ENCODE measurements at regions of chr10 and their contacts with region 1.

Region 1: DNA sequence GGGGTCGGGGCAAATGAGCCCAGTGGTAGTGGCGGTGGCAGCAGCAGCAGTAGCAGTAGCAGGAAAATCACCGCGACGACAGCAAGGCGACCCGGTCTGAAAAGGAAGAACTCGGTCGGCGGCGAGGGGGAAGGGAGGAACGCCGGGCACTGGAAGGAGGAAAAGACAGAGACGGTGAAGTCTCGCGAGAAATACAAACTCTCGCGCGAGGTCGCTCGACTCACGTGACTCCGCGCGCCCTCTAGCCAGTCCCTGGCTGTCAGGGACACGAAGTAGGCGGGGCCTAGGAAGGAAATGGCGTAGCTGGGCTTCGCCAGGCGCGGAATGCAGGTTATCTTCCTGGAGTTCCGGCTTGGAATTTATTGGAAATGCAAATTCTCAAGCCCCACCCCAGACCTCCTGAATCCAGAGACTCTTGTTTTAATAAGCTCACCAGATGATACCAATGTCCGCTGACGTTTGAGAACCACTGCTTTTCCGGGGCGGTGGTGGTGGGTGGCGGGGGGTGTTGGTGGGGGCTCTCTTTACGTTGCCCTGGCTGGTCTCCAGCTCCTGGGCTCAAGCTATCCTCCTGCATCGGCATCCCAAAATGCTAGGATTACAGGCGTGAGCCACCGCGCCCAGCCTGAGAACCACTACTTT is at the start of gene SMNDC1:
- DNase-seq: peak; percentile 98
- ATAC-seq: peak; percentile 93
- H3K4me3 ChIP-seq: peak within 1 kb of the TSS; percentile 64 to 89 (median 79)
- H3K4me3 Mint-ChIP-seq: peak within 1 kb of the TSS; percentile 98
- H3K27ac ChIP-seq: peak within 1 kb of the TSS; percentile 76 to 91
- H3K27ac Mint-ChIP-seq: peak within 1 kb of the TSS; percentile 99
- H3K4me1 ChIP-seq: peaks cover 20 to 24% of the 10 kb centered on the region in 2 donors
- H3K4me1 Mint-ChIP-seq: peaks cover 43% of the 10 kb centered on the region
- H3K27me3 ChIP-seq: no peaks in the 10 kb centered on the region
- H3K27me3 Mint-ChIP-seq: no peaks in the 10 kb centered on the region
- CTCF ChIP-seq: no peak
- total RNA-seq, gene SMNDC1: 34.4 and 36.0 TPM in 2 replicates

Region 2: GRCh38 chr10:110210674-110211464 is 94.0 kb before region 1 on chr10:
- CTCF ChIA-PET with region 1: interaction called, 5 read pairs
- POLR2A ChIA-PET with region 1: interaction called, 3 read pairs
- intact Hi-C with region 1: loop called (anchors 1 kb)
- DNase-seq: peak; percentile 94
- ATAC-seq: peak; percentile 68
- H3K4me3 ChIP-seq: peak overlapping the region; percentile 67 to 90 (median 82)
- H3K4me3 Mint-ChIP-seq: peak overlapping the region; percentile 88
- H3K27ac ChIP-seq: peak overlapping the region; percentile 82 to 85
- H3K27ac Mint-ChIP-seq: peak overlapping the region; percentile 97
- H3K4me1 ChIP-seq: peaks cover 44 to 67% of the 10 kb centered on the region in 2 donors
- H3K4me1 Mint-ChIP-seq: peaks cover 58% of the 10 kb centered on the region
- H3K27me3 ChIP-seq: peaks cover 0 to 18% (median 7%) of the 10 kb centered on the region in 4 experiments
- H3K27me3 Mint-ChIP-seq: peaks cover 4% of the 10 kb centered on the region
- CTCF ChIP-seq: no peak

Region 3: GRCh38 chr10:110241407-110241806 is 63.5 kb before region 1 on chr10:
- CTCF ChIA-PET with region 1: no interaction called
- POLR2A ChIA-PET with region 1: no interaction called
- intact Hi-C with region 1: no loop called
- DNase-seq: no peak
- ATAC-seq: no peak
- H3K4me3 ChIP-seq: no peak overlapping the region
- H3K4me3 Mint-ChIP-seq: no peak overlapping the region
- H3K27ac ChIP-seq: no peak overlapping the region
- H3K27ac Mint-ChIP-seq: no peak overlapping the region
- H3K4me1 ChIP-seq: peaks cover 3 to 6% of the 10 kb centered on the region in 2 donors
- H3K4me1 Mint-ChIP-seq: peaks cover 16% of the 10 kb centered on the region
- H3K27me3 ChIP-seq: no peaks in the 10 kb centered on the region
- H3K27me3 Mint-ChIP-seq: peaks cover 3% of the 10 kb centered on the region
- CTCF ChIP-seq: no peak

Region 4: DNA sequence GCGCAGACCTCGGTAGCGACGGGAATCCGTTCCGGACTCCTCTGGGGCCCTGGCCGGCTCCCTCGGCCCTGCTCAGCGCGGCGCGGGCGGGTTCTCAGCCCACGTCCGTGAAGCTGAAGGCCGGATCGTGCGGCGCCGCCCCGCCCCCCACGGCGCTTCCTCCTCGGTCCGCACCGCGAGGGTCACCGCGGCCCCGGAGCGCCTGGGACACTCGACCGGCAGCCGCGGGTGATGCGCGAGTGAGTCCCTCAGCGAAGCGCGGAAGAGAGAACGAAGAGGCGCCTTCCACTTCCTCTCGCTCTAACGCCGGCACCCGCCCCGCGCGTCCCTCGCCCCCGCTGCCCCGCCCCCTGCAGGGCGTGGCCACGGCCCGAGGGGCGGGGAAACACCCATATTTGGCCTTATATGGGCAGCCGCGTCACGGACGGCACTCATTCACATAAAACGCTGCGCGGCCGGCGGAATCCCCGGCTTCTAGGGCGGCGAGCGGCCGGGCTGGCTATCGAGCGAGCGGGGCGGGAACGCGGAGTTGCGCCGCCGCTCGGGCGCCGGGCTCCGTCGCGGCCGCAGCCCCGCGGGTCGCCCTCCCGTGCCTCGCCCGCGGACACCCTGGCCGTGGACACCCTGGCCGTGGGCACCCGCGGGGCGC is 192.7 kb after region 1 on chr10 and contains the start of gene DUSP5:
- CTCF ChIA-PET with region 1: interaction called, 5 read pairs
- POLR2A ChIA-PET with region 1: interaction called, 4 read pairs
- intact Hi-C with region 1: loop called (anchors 1 kb)
- DNase-seq: peak; percentile 99
- ATAC-seq: peak; percentile 91
- H3K4me3 ChIP-seq: peak within 1 kb of the TSS in 4 of 5 experiments; percentile 57 to 71 (median 62)
- H3K4me3 Mint-ChIP-seq: peak within 1 kb of the TSS; percentile 93
- H3K27ac ChIP-seq: peak within 1 kb of the TSS; percentile 65 to 80
- H3K27ac Mint-ChIP-seq: peak within 1 kb of the TSS; percentile 93
- H3K4me1 ChIP-seq: peaks cover 35 to 51% of the 10 kb centered on the region in 2 donors
- H3K4me1 Mint-ChIP-seq: peaks cover 56% of the 10 kb centered on the region
- H3K27me3 ChIP-seq: peaks cover 0 to 14% (median 2%) of the 10 kb centered on the region in 4 experiments
- H3K27me3 Mint-ChIP-seq: peaks cover 6% of the 10 kb centered on the region
- CTCF ChIP-seq: no peak
- total RNA-seq, gene DUSP5: 10.0 and 10.8 TPM in 2 replicates

Region 5: GRCh38 chr10:110556969-110557601 is 252.2 kb after region 1 on chr10:
- CTCF ChIA-PET with region 1: interaction called, 34 read pairs
- POLR2A ChIA-PET with region 1: interaction called, 5 read pairs
- intact Hi-C with region 1: no loop called
- DNase-seq: peak; percentile 79
- ATAC-seq: peak; percentile 83
- H3K4me3 ChIP-seq: no peak overlapping the region
- H3K4me3 Mint-ChIP-seq: no peak overlapping the region
- H3K27ac ChIP-seq: no peak overlapping the region
- H3K27ac Mint-ChIP-seq: no peak overlapping the region
- H3K4me1 ChIP-seq: peaks cover 0 to 4% of the 10 kb centered on the region in 2 donors
- H3K4me1 Mint-ChIP-seq: peaks cover 3% of the 10 kb centered on the region
- H3K27me3 ChIP-seq: peaks cover 0 to 6% (median 2%) of the 10 kb centered on the region in 4 experiments
- H3K27me3 Mint-ChIP-seq: peaks cover 15% of the 10 kb centered on the region
- CTCF ChIP-seq: peak; percentile 72

Region 6: DNA sequence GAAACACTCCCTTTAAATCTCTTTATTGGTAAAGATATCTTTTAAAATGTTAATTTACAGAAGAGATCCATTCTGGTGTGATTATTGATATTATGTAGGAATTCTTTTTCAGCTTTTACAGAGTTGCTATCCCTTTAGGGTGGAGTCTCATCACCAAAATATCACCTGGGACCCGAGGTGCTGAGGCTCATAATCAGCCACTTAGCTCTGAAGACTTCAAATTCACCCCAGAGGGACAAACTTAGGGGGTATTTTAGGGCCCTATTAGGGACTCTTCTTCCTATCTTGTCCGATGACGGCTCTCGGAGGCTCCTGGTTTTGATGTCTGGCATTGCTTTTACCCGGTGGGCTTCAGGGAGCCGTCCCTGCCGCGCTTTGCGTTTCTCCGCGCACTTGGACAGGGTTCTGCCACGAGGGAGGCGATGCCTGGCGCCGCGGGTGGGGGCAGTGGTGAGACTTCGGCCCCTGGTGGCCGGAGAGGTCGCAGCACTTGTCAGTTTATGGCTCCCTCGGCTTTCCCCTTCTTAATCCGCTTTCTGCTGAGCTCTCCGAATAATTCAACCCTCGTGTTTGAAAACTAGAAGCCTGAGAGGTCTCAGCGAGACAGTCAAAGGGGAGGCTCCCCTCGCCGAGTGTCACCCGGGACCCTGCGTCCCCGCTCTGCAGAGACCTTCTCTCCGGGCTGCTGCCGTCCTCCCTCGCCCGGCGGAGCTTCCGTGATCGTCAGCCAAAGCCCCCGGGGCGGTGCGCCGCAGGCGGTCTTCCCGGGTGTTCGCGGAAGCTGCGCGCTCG is 367.1 kb after region 1 on chr10:
- CTCF ChIA-PET with region 1: interaction called, 6 read pairs
- POLR2A ChIA-PET with region 1: interaction called, 4 read pairs
- intact Hi-C with region 1: loop called (anchors 2 kb)
- DNase-seq: peak; percentile 79
- ATAC-seq: peak; percentile 94
- H3K4me3 ChIP-seq: peak overlapping the region; percentile 63 to 77 (median 72)
- H3K4me3 Mint-ChIP-seq: peak overlapping the region; percentile 91
- H3K27ac ChIP-seq: peak overlapping the region; percentile 70 to 76
- H3K27ac Mint-ChIP-seq: peak overlapping the region; percentile 77
- H3K4me1 ChIP-seq: peaks cover 3 to 8% of the 10 kb centered on the region in 2 donors
- H3K4me1 Mint-ChIP-seq: peaks cover 2% of the 10 kb centered on the region
- H3K27me3 ChIP-seq: no peaks in the 10 kb centered on the region
- H3K27me3 Mint-ChIP-seq: peaks cover 38% of the 10 kb centered on the region
- CTCF ChIP-seq: peak; percentile 94

Region 7: GRCh38 chr10:110783509-110784107 is 478.7 kb after region 1 on chr10:
- CTCF ChIA-PET with region 1: no interaction called
- POLR2A ChIA-PET with region 1: no interaction called
- intact Hi-C with region 1: no loop called
- DNase-seq: no peak
- ATAC-seq: no peak
- H3K4me3 ChIP-seq: no peak overlapping the region
- H3K4me3 Mint-ChIP-seq: no peak overlapping the region
- H3K27ac ChIP-seq: no peak overlapping the region
- H3K27ac Mint-ChIP-seq: no peak overlapping the region
- H3K4me1 ChIP-seq: no peaks in the 10 kb centered on the region
- H3K4me1 Mint-ChIP-seq: no peaks in the 10 kb centered on the region
- H3K27me3 ChIP-seq: peaks cover 0 to 3% (median 2%) of the 10 kb centered on the region in 4 experiments
- H3K27me3 Mint-ChIP-seq: peaks cover 9% of the 10 kb centered on the region
- CTCF ChIP-seq: no peak